ENCODE measurements at regions of chr1 and their contacts with region 1.

Region 1: DNA sequence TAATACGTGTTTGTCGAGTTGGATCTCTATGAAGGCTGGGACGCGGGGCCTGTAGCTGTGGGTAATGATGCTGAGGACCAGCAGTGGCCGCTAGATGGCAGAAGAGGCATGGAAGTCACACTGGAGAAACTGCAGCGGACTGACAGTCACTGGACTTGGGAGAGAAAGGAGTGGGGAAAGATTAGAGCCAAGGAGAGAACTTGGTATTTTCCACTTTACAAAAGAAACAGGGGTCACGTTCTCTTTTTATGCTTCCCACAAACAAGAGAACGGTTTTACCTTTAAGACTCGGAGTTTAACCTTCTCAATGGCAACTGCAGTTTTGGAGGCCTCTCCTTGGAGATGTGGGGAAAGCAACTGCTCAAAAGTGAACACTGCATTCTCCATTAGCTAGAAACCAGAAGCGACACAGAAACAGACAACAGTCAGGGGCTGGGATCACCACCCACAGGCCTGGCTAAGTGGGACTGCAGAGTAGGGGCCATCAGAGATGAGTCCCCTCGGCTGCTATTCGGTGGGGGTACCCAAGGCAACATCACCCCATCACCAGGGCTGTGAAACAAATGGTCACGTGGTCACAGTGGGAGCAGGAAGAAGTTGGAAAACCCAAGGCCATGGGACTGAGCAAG is 51.1 kb upstream of the EDEM3 start:
- DNase-seq: peak; percentile 76
- CTCF ChIP-seq: peak; percentile 94

Region 2: GRCh38 chr1:184975208-184975870 is 169.6 kb after region 1 on chr1:
- in situ Hi-C with region 1: loop called (anchors 5 kb)
- DNase-seq: no peak
- CTCF ChIP-seq: no peak

Region 3: GRCh38 chr1:185156854-185157598 is 351.2 kb after region 1 on chr1 and contains the starts of genes SWT1 and TRMT1L:
- in situ Hi-C with region 1: loop called (anchors 25 kb)
- DNase-seq: peak; percentile 91
- CTCF ChIP-seq: no peak

Region 4: GRCh38 chr1:185681034-185681633 is 875.4 kb after region 1 on chr1:
- in situ Hi-C with region 1: loop called (anchors 25 kb)
- DNase-seq: no peak
- CTCF ChIP-seq: peak; percentile 67